Natural killer cell (primary cell): ENCODE measurements at regions of chr6 and their contacts with region 1.

Region 1: DNA sequence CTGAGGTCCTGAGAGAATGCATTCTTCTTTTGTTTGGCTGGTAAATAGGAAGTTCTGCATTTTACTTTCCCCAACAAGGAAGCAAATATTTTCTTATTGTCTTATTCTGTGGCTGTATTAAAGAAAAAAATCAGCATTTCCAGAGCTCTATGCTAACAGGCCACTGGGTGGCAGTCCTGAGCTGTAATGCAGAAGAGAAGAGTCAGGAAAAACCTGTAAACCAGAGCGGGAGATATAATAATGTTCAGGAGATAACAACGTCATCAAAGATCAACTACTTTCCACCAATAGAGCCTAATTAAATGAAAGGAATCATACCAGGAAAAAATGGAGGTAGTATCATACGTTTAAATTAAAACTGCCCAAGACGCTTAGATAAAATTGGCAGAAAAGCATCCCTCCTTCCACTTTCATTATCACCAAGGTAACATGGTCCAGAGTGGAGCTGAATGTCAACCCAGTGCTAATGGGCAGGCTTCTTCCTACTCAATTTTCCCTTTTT is 55.6 kb upstream of the CARMIL1 start:
- DNase-seq: peak; percentile 47 to 83
- ATAC-seq: peak; percentile 65 to 82 (median 72)
- H3K4me3 ChIP-seq: no peak overlapping the region
- H3K4me3 Mint-ChIP-seq: peak overlapping the region; percentile 49
- H3K27ac ChIP-seq: no peak overlapping the region
- H3K27ac Mint-ChIP-seq: no peak overlapping the region
- H3K4me1 ChIP-seq: no peaks in the 10 kb centered on the region
- H3K4me1 Mint-ChIP-seq: peaks cover 12% of the 10 kb centered on the region in 2 donors
- H3K27me3 ChIP-seq: peaks cover 3% of the 10 kb centered on the region
- H3K27me3 Mint-ChIP-seq: peaks cover 15 to 17% of the 10 kb centered on the region in 2 donors
- CTCF ChIP-seq: peak; percentile 89

Region 2: GRCh38 chr6:25490018-25490801 is 266.7 kb after region 1 on chr6:
- intact Hi-C with region 1: loop called (anchors 1 kb)
- DNase-seq: peak; percentile 38 to 84
- ATAC-seq: peak; percentile 68 to 86 (median 70)
- H3K4me3 ChIP-seq: no peak overlapping the region
- H3K4me3 Mint-ChIP-seq: no peak overlapping the region
- H3K27ac ChIP-seq: no peak overlapping the region
- H3K27ac Mint-ChIP-seq: no peak overlapping the region
- H3K4me1 ChIP-seq: peaks cover 5% of the 10 kb centered on the region
- H3K4me1 Mint-ChIP-seq: no peaks in the 10 kb centered on the region
- H3K27me3 ChIP-seq: no peaks in the 10 kb centered on the region
- H3K27me3 Mint-ChIP-seq: peaks cover 0 to 8% of the 10 kb centered on the region in 2 donors
- CTCF ChIP-seq: peak; percentile 75

Region 3: DNA sequence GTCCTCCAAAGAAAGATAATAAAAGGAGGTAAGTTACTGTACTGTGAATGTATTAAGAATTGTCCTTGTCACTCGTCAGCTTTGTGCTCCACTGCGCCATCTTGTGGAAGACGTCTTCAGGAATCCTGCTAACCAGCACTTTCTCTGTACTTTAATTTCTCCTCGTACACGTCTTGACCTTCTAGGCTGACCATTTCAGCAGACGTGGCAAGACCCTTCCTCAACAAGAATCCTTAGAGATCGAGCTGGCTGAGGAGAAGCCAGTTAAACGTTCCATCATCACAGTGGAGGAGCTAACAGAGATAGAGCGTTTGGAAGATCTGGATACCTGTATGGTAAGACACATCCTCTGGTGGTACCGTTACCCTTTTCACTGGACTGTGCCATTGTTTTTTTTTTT is 333.0 kb after region 1 on chr6:
- intact Hi-C with region 1: loop called (anchors 1 kb)
- DNase-seq: peak; percentile 50 to 86
- ATAC-seq: peak in 1 of 3 donors; percentile 70
- H3K4me3 ChIP-seq: no peak overlapping the region
- H3K4me3 Mint-ChIP-seq: no peak overlapping the region
- H3K27ac ChIP-seq: no peak overlapping the region
- H3K27ac Mint-ChIP-seq: no peak overlapping the region
- H3K4me1 ChIP-seq: no peaks in the 10 kb centered on the region
- H3K4me1 Mint-ChIP-seq: peaks cover 0 to 4% of the 10 kb centered on the region in 2 donors
- H3K27me3 ChIP-seq: no peaks in the 10 kb centered on the region
- H3K27me3 Mint-ChIP-seq: peaks cover 13 to 38% of the 10 kb centered on the region in 2 donors
- CTCF ChIP-seq: peak; percentile 76

Region 4: GRCh38 chr6:25601800-25602673 is 378.5 kb after region 1 on chr6:
- intact Hi-C with region 1: loop called (anchors 1 kb)
- DNase-seq: peak in 1 of 2 donors; percentile 77
- ATAC-seq: peak in 1 of 3 donors; percentile 40
- H3K4me3 ChIP-seq: no peak overlapping the region
- H3K4me3 Mint-ChIP-seq: no peak overlapping the region
- H3K27ac ChIP-seq: no peak overlapping the region
- H3K27ac Mint-ChIP-seq: no peak overlapping the region
- H3K4me1 ChIP-seq: no peaks in the 10 kb centered on the region
- H3K4me1 Mint-ChIP-seq: no peaks in the 10 kb centered on the region
- H3K27me3 ChIP-seq: no peaks in the 10 kb centered on the region
- H3K27me3 Mint-ChIP-seq: peaks cover 5 to 12% of the 10 kb centered on the region in 2 donors
- CTCF ChIP-seq: peak; percentile 73